H1 (cell line): ENCODE measurements at regions of chr15 and their contacts with region 1.

Region 1: GRCh38 chr15:44663409-44664308 is at the start of gene SPG11:
- DNase-seq: peak; percentile 98 to 99
- H3K4me3 ChIP-seq: peak within 1 kb of the TSS; percentile 53 to 94 (median 88)
- H3K27ac ChIP-seq: peak within 1 kb of the TSS; percentile 82
- H3K4me1 ChIP-seq: peaks cover 0 to 1% (median 0%) of the 10 kb centered on the region in 4 experiments; a peak in 3 of 7 replicates
- H3K27me3 ChIP-seq: no peaks in the 10 kb centered on the region
- CTCF ChIP-seq: peak; percentile 85 to 96 (median 90)
- EP300 ChIP-seq: no peak
- POLR2A ChIP-seq: peak; percentile 82 to 92
- RAD21 ChIP-seq: peak; percentile 93 to 94
- total RNA-seq, gene SPG11: 32.5 and 37.1 TPM in 2 replicates

Region 2: DNA sequence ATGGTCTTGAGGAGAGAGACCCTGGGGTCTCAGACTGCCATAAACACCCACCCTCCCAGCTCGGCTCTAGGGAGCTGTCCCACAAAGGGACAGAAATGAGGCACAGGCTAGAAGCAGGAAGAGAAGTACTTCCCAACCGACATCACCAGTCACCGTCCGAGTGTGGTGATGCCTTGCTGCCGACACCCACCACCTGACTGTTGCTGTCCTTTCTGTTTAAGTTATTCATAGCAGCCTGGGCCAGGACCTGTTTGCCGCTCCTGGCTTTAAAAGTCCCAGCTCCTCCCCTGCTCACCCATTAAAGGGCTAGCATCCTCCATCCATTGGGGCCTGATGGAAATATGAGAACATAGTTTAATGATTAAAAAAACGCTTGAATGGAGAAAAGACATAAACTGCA is 13.0 kb after region 1 on chr15:
- CTCF ChIA-PET with region 1: interaction called, 20 read pairs
- POLR2A ChIA-PET with region 1: interaction called, 7 read pairs
- DNase-seq: no peak
- H3K4me3 ChIP-seq: no peak overlapping the region
- H3K27ac ChIP-seq: no peak overlapping the region
- H3K4me1 ChIP-seq: no peaks in the 10 kb centered on the region
- H3K27me3 ChIP-seq: no peaks in the 10 kb centered on the region
- CTCF ChIP-seq: no peak
- EP300 ChIP-seq: no peak
- POLR2A ChIP-seq: no peak
- RAD21 ChIP-seq: no peak

Region 3: DNA sequence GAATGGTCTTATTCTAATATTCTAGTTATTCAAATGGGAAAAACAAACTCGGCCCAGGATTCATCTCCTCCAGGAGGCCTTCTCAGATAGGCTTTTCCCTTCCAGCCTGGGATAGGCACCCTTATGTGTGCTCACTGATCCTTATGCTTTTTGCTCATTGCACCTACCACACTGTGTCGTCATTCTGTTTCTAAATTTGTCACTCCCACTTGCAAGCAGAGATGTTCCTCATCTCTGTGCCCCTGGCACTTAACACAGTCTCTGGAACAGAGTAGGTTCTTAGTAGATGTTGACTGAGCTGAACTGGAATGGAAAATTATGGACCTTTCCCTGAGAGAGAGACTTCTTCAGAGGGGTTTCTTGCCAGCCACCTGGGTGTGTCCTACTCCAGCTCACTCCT is 18.6 kb after region 1 on chr15:
- CTCF ChIA-PET with region 1: interaction called, 17 read pairs
- POLR2A ChIA-PET with region 1: interaction called, 9 read pairs
- DNase-seq: no peak
- H3K4me3 ChIP-seq: no peak overlapping the region
- H3K27ac ChIP-seq: no peak overlapping the region
- H3K4me1 ChIP-seq: peaks cover 0 to 8% (median 5%) of the 10 kb centered on the region in 4 experiments; a peak in 5 of 7 replicates
- H3K27me3 ChIP-seq: no peaks in the 10 kb centered on the region
- CTCF ChIP-seq: no peak
- EP300 ChIP-seq: no peak
- POLR2A ChIP-seq: no peak
- RAD21 ChIP-seq: no peak

Region 4: DNA sequence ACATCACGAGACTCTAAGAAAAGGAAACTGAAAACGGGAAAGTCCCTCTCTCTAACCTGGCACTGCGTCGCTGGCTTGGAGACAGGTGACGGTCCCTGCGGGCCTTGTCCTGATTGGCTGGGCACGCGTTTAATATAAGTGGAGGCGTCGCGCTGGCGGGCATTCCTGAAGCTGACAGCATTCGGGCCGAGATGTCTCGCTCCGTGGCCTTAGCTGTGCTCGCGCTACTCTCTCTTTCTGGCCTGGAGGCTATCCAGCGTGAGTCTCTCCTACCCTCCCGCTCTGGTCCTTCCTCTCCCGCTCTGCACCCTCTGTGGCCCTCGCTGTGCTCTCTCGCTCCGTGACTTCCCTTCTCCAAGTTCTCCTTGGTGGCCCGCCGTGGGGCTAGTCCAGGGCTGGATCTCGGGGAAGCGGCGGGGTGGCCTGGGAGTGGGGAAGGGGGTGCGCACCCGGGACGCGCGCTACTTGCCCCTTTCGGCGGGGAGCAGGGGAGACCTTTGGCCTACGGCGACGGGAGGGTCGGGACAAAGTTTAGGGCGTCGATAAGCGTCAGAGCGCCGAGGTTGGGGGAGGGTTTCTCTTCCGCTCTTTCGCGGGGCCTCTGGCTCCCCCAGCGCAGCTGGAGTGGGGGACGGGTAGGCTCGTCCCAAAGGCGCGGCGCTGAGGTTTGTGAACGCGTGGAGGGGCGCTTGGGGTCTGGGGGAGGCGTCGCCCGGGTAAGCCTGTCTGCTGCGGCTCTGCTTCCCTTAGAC is 47.9 kb after region 1 on chr15 and contains the start of gene B2M:
- CTCF ChIA-PET with region 1: interaction called, 40 read pairs
- POLR2A ChIA-PET with region 1: interaction called, 20 read pairs
- DNase-seq: peak; percentile 83 to 96
- H3K4me3 ChIP-seq: peak within 1 kb of the TSS; percentile 79 to 95 (median 88)
- H3K27ac ChIP-seq: peak within 1 kb of the TSS; percentile 60; the same call in 1 of the 2 replicates
- H3K4me1 ChIP-seq: 0 out of 7 replicates have a peak, but pooled peaks cover 0 to 3% (median 0%) of the 10 kb centered on the region in 4 experiments
- H3K27me3 ChIP-seq: peaks cover 0 to 10% (median 8%) of the 10 kb centered on the region in 4 experiments; a peak in 5 of 7 replicates
- CTCF ChIP-seq: no peak
- EP300 ChIP-seq: no peak
- POLR2A ChIP-seq: peak; percentile 93 to 97
- RAD21 ChIP-seq: no peak
- total RNA-seq, gene B2M: 71.2 and 78.9 TPM in 2 replicates

Region 5: GRCh38 chr15:44728576-44729407 is 65.1 kb after region 1 on chr15:
- CTCF ChIA-PET with region 1: interaction called, 17 read pairs
- POLR2A ChIA-PET with region 1: interaction called, 14 read pairs
- DNase-seq: peak; percentile 84 to 89
- H3K4me3 ChIP-seq: peak overlapping the region; percentile 80 to 90 (median 90)
- H3K27ac ChIP-seq: peak overlapping the region; percentile 51; the same call in 1 of the 2 replicates
- H3K4me1 ChIP-seq: peaks cover 0 to 7% (median 4%) of the 10 kb centered on the region in 4 experiments; a peak in 4 of 7 replicates
- H3K27me3 ChIP-seq: no peaks in the 10 kb centered on the region
- CTCF ChIP-seq: no peak
- EP300 ChIP-seq: no peak
- POLR2A ChIP-seq: peak in 1 of 2 experiments; percentile 67; a peak in 2 of 3 replicates
- RAD21 ChIP-seq: no peak

Region 6: GRCh38 chr15:44738340-44738984 is 74.8 kb after region 1 on chr15:
- CTCF ChIA-PET with region 1: interaction called, 87 read pairs
- POLR2A ChIA-PET with region 1: interaction called, 9 read pairs
- DNase-seq: no peak
- H3K4me3 ChIP-seq: no peak overlapping the region
- H3K27ac ChIP-seq: no peak overlapping the region
- H3K4me1 ChIP-seq: no peaks in the 10 kb centered on the region
- H3K27me3 ChIP-seq: no peaks in the 10 kb centered on the region
- CTCF ChIP-seq: peak in 2 of 3 experiments; percentile 39 to 42; a peak in 2 of 4 replicates
- EP300 ChIP-seq: no peak
- POLR2A ChIP-seq: no peak
- RAD21 ChIP-seq: peak; percentile 73 to 77